ENCODE measurements at regions of chr20 and their contacts with region 1.

Region 1: GRCh38 chr20:59495894-59496510 is 108.3 kb upstream of the PHACTR3 start:
- DNase-seq: peak; percentile 78
- CTCF ChIP-seq: peak; percentile 94

Region 2: DNA sequence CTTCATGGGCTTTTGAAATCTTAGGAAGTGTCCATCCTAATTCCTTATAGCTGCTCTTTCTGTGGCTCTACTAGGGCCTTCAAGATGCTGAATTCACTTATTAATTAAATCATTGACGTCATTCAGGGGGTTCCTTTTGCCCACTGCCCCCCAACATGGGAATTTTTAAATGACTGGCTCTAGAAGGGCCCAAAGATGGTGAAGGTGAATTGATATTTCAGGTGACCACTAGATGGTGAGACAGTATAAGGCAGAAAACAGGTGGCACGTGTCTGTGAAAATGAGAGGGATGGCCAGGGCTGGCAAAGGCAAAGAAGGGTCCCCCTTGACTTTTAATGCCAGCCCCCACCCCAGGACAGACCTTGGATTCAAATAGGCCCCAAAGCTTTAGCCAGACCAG is 631.7 kb before region 1 on chr20:
- CTCF ChIA-PET with region 1: interaction called, 14 read pairs
- POLR2A ChIA-PET with region 1: no interaction called
- DNase-seq: no peak
- CTCF ChIP-seq: peak; percentile 57

Region 3: DNA sequence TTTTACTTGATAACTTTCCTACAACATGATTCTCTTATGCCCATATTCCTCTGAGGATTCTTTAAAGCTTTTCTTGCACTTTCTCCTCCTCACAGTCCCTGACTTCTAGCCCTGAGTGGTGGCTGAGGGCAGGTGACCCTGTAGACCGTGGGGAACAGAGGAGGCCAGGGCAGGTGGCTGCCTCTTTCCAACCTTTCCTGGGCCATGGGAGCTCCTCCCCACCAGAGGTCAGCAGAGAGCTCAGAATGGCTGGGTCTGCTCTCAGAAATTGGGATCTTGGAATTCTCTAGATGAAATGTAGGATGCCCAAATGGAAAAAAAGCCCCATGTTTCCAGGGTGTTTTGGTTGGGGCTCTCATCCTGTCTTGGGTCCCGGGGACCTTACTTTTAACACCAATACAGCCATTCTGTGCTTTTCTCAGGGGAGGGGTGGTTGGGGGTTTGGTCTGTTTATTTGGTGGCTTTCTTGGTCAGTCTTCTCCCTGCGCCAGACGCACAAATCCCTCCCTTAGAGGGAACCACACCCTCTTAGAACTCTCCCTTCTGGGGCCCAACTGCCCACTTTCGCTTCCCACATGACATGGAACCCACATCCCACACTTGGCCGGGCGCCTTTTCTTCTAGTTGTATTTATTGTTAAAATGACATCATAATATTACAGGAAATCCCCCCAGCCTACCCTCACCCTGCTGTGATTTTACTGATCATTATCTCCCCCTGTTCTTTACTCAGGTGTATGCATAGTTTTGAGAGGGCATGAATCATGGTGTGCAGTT is 625.6 kb before region 1 on chr20:
- CTCF ChIA-PET with region 1: interaction called, 14 read pairs
- POLR2A ChIA-PET with region 1: no interaction called
- DNase-seq: peak; percentile 64
- CTCF ChIP-seq: peak; percentile 89

Region 4: GRCh38 chr20:59472059-59472458 is 23.9 kb before region 1 on chr20:
- CTCF ChIA-PET with region 1: interaction called, 19 read pairs
- POLR2A ChIA-PET with region 1: no interaction called
- DNase-seq: no peak
- CTCF ChIP-seq: no peak

Region 5: DNA sequence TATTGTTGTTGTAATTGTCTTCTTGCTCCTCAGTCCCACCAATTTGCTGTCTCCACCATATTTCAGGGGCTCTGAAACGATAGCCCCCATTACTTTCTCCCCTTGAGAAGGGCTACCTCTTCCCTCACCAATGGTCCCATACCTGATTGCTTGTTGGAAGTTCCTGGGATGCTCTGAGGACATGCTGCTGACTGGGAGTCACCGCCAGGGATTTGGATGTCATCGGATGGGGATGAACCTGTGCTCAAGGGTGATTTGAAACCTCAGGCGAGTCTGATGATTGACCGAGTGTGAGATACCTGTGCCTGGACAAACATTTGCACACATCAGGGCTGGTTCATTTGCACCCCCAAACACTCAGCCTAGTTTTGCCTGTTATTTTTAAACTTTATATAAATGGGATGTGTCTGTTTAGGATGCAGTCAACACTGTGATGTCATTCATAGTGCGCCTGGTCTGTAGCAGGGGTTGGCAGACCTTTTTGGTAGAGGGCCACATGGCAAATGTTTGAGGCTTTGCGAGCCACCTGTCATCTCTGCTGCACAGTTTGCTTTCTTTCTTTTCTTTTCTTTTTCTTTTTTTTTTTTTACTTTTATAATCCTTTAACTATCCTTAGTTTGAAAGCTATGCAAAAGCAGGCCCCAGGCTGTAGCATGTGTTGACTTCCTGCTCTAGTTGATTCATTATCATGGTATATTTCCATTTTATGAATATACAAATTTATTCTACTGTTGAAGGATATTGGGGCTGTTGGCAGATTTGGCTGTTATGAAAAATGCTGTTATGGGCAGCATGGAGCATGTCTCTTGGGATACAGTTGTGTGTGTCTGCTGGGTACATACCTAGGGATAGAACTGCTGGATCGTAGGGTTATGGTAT is 10.2 kb before region 1 on chr20:
- CTCF ChIA-PET with region 1: interaction called, 17 read pairs
- POLR2A ChIA-PET with region 1: no interaction called
- DNase-seq: no peak
- CTCF ChIP-seq: no peak

Region 6: GRCh38 chr20:59508729-59509128 is 12.7 kb after region 1 on chr20:
- CTCF ChIA-PET with region 1: interaction called, 29 read pairs
- POLR2A ChIA-PET with region 1: no interaction called
- DNase-seq: no peak
- CTCF ChIP-seq: no peak

Region 7: DNA sequence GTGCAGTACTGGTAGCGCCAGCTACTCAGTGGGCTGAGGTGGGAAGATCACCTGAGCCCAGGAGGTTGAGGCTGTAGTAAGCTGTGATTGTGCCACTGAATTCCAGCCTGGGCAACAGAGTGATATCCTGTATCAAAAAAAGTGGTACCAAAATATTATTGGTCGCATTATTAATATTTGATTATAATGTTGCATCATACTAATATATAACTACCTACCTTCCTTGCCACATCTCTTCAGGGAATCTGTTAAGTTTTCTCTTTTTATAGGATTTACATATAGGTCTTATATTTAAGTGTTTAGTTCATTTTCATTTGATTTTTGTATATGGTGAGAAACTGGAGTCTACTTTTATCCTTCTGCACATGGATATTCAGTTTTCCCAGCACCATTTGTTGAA is 42.0 kb after region 1 on chr20:
- CTCF ChIA-PET with region 1: no interaction called
- POLR2A ChIA-PET with region 1: no interaction called
- DNase-seq: no peak
- CTCF ChIP-seq: no peak

Region 8: GRCh38 chr20:59866338-59866737 is 370.3 kb after region 1 on chr20:
- CTCF ChIA-PET with region 1: no interaction called
- POLR2A ChIA-PET with region 1: no interaction called
- DNase-seq: no peak
- CTCF ChIP-seq: no peak

Measured in GM10248 (cell line).